ENCODE measurements at regions of chr10 and their contacts with region 1.

Region 1: DNA sequence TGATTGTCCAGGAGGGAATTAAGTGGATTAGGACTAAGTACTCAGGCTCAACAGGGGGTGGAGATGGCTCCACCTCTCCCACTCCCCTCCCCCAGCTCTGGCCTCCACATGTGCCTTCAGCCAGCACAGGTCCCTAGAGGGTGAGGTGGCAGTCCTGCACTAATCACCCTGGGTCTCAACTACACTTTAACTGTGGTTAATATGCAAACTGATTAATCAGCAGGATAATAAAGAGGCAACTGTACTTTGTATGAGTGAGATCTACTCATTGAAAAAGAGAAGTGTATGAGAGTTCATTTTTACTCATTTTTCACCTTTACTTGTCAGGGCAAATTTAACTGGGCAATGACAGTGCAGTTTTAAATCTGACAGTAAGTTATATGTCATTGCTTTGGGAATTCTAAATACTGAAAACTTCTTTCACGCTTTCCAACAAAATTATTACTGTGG is 223.8 kb upstream of the CCDC6 start:
- DNase-seq: peak; percentile 62 to 90 (median 76)
- ATAC-seq: peak; percentile 99
- H3K4me3 ChIP-seq: no peak overlapping the region
- H3K27ac ChIP-seq: peak overlapping the region; percentile 79
- H3K4me1 ChIP-seq: peaks cover 0 to 33% of the 10 kb centered on the region in 2 experiments; a peak in 4 of 5 replicates
- H3K27me3 ChIP-seq: no peaks in the 10 kb centered on the region
- CTCF ChIP-seq: 0 out of 6 replicates have a peak, but pooled peaks of 1 of the 3 experiments have one; percentile 4
- EP300 ChIP-seq: no peak
- POLR2A ChIP-seq: peak; percentile 69
- RAD21 ChIP-seq: no peak

Region 2: DNA sequence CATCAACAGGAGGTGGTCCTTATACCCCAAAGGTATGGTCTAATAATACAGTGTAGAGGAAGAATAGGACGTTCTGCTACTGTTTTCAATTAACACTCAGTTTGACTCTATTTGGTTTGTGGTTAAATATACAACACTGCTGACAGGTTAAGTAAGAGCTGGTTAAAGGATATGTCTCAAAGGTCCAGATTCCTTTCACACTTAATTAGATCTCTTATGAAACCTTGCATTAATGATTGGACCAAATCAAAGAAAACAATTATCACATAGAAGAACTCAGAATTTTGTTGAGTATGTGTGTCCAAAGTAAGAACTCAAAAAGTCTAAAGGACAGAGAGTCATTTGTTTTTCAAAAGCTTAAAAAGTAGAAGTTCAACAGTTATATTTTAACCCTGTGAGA is 394.9 kb before region 1 on chr10:
- CTCF ChIA-PET with region 1: no interaction called
- POLR2A ChIA-PET with region 1: no interaction called
- in situ Hi-C with region 1: no loop called
- intact Hi-C with region 1: no loop called
- DNase-seq: no peak
- ATAC-seq: no peak
- H3K4me3 ChIP-seq: no peak overlapping the region
- H3K27ac ChIP-seq: no peak overlapping the region
- H3K4me1 ChIP-seq: no peaks in the 10 kb centered on the region
- H3K27me3 ChIP-seq: no peaks in the 10 kb centered on the region
- CTCF ChIP-seq: no peak
- EP300 ChIP-seq: no peak
- POLR2A ChIP-seq: no peak
- RAD21 ChIP-seq: no peak

Region 3: DNA sequence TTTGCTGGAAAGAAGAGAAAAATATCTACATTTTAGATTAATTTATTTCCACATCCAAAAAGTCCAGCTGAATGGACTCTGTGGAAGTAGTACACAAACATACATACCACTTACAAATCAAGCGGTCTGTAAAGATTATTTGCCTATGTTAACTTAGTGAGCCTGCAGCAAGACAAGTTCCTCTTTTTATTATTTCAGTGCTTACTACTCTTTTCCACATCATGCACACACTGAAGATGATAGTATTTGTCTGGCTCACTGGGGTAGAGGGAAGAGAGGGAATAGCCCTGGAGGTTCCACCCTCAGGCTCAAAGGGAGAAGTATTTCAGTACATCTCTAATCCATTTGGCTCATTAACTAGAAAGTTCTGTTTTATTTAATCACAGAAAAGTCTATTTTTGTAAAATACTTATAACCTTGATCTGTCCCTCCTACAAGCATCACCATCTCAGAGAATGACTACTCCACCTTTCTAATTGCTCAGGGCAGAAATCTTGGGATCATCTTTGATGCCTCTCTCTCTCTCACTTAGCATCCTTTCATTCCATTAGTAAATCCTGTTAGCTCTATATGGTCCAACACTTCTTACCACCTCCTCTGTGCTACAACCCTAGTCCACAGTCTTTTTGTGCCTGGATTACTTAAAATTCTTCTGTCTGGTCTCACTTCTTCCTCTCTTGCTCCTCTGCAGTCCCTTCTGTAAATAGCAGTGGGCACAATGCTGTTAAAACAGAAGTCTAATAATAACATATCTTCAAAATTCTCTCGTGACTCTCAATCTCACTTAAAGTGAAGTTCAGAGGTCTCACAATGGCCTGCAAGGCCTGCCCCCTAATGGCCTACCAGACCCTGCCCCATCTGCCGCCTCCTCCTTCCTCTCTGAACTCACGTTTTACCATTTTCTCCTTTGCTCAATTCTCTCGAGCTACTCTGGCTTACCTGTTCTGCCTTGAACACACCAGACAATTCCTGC is 159.5 kb before region 1 on chr10:
- CTCF ChIA-PET with region 1: no interaction called
- POLR2A ChIA-PET with region 1: no interaction called
- in situ Hi-C with region 1: no loop called
- intact Hi-C with region 1: no loop called
- DNase-seq: no peak
- ATAC-seq: peak; percentile 63
- H3K4me3 ChIP-seq: no peak overlapping the region
- H3K27ac ChIP-seq: no peak overlapping the region
- H3K4me1 ChIP-seq: peaks cover 3 to 6% of the 10 kb centered on the region in 2 experiments; a peak in 3 of 5 replicates
- H3K27me3 ChIP-seq: no peaks in the 10 kb centered on the region
- CTCF ChIP-seq: 0 out of 6 replicates have a peak, but pooled peaks of 1 of the 3 experiments have one; percentile 18
- EP300 ChIP-seq: no peak
- POLR2A ChIP-seq: no peak
- RAD21 ChIP-seq: 0 out of 4 replicates have a peak, but pooled peaks of 1 of the 2 experiments have one; percentile 12

Region 4: GRCh38 chr10:60140651-60141632 is 10.8 kb after region 1 on chr10:
- CTCF ChIA-PET with region 1: no interaction called
- POLR2A ChIA-PET with region 1: interaction called, 16 read pairs
- in situ Hi-C with region 1: no loop called
- intact Hi-C with region 1: no loop called
- DNase-seq: peak; percentile 35 to 79 (median 60)
- ATAC-seq: peak; percentile 94
- H3K4me3 ChIP-seq: peak overlapping the region; percentile 28
- H3K27ac ChIP-seq: peak overlapping the region; percentile 61
- H3K4me1 ChIP-seq: peaks cover 0 to 24% of the 10 kb centered on the region in 2 experiments; a peak in 2 of 5 replicates
- H3K27me3 ChIP-seq: no peaks in the 10 kb centered on the region
- CTCF ChIP-seq: peak; percentile 10 to 32 (median 30); a peak in 1 of 6 replicates
- EP300 ChIP-seq: no peak
- POLR2A ChIP-seq: peak; percentile 29; the same call in 1 of the 2 replicates
- RAD21 ChIP-seq: no peak